Activated CD8-positive, alpha-beta T cell treated with anti-CD3 and anti-CD28 coated beads for 36 hours (primary cell): ENCODE measurements at regions of chr17 and their contacts with region 1.

Region 1: DNA sequence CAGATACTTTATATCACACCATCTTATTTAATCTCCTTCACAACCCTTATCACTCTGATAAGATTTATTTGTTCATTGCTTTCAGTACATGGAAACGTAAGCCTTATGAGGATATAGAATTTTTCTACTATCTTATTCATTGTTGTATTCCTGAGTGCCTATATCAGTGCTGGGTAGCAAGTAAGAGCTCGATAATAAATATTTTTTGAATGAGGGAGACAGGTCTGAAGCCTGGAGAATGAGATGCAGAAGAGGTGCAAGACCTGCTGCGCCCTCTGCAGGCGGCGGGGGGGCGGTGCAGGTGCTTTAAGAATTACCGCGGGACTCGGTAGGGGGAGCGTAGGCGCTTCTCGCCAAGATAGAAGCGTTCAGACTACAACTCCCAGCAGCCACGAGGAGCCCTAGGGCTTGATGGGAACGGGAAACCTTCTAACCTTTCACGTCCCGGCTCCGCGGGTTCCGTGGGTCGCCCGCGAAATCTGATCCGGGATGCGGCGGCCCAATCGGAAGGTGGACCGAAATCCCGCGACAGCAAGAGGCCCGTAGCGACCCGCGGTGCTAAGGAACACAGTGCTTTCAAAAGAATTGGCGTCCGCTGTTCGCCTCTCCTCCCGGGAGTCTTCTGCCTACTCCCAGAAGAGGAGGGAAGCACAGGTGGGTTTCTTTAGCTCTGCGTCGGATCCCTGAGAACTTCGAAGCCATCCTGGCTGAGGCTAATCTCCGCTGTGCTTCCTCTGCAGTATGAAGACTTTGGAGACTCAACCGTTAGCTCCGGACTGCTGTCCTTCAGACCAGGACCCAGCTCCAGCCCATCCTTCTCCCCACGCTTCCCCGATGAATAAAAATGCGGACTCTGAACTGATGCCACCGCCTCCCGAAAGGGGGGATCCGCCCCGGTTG is at the start of gene WRAP53:
- DNase-seq: peak; percentile 98
- ATAC-seq: peak; percentile 81
- H3K4me3 Mint-ChIP-seq: peak within 1 kb of the TSS; percentile 92
- H3K27ac Mint-ChIP-seq: peak within 1 kb of the TSS; percentile 99
- H3K4me1 Mint-ChIP-seq: peaks cover 29% of the 10 kb centered on the region
- H3K27me3 Mint-ChIP-seq: no peaks in the 10 kb centered on the region
- CTCF ChIP-seq: peak; percentile 100
- total RNA-seq, gene WRAP53: 27.5 to 28.6 TPM

Region 2: GRCh38 chr17:7435221-7435675 is 252.9 kb before region 1 on chr17 and contains the start of gene TMEM102:
- CTCF ChIA-PET with region 1: interaction called, 11 read pairs
- POLR2A ChIA-PET with region 1: interaction called, 28 read pairs
- intact Hi-C with region 1: no loop called
- DNase-seq: peak; percentile 99
- ATAC-seq: peak; percentile 82
- H3K4me3 Mint-ChIP-seq: peak within 1 kb of the TSS; percentile 94
- H3K27ac Mint-ChIP-seq: peak within 1 kb of the TSS; percentile 97
- H3K4me1 Mint-ChIP-seq: peaks cover 23% of the 10 kb centered on the region
- H3K27me3 Mint-ChIP-seq: peaks cover 12% of the 10 kb centered on the region
- CTCF ChIP-seq: no peak
- total RNA-seq, gene TMEM102: 12.5 to 14.2 TPM

Region 3: GRCh38 chr17:7572588-7573323 is 115.4 kb before region 1 on chr17:
- CTCF ChIA-PET with region 1: interaction called, 6 read pairs
- POLR2A ChIA-PET with region 1: interaction called, 71 read pairs
- intact Hi-C with region 1: no loop called
- DNase-seq: peak; percentile 99
- ATAC-seq: peak; percentile 92
- H3K4me3 Mint-ChIP-seq: peak overlapping the region; percentile 98
- H3K27ac Mint-ChIP-seq: peak overlapping the region; percentile 100
- H3K4me1 Mint-ChIP-seq: peaks cover 45% of the 10 kb centered on the region
- H3K27me3 Mint-ChIP-seq: peaks cover 1% of the 10 kb centered on the region
- CTCF ChIP-seq: no peak

Region 4: DNA sequence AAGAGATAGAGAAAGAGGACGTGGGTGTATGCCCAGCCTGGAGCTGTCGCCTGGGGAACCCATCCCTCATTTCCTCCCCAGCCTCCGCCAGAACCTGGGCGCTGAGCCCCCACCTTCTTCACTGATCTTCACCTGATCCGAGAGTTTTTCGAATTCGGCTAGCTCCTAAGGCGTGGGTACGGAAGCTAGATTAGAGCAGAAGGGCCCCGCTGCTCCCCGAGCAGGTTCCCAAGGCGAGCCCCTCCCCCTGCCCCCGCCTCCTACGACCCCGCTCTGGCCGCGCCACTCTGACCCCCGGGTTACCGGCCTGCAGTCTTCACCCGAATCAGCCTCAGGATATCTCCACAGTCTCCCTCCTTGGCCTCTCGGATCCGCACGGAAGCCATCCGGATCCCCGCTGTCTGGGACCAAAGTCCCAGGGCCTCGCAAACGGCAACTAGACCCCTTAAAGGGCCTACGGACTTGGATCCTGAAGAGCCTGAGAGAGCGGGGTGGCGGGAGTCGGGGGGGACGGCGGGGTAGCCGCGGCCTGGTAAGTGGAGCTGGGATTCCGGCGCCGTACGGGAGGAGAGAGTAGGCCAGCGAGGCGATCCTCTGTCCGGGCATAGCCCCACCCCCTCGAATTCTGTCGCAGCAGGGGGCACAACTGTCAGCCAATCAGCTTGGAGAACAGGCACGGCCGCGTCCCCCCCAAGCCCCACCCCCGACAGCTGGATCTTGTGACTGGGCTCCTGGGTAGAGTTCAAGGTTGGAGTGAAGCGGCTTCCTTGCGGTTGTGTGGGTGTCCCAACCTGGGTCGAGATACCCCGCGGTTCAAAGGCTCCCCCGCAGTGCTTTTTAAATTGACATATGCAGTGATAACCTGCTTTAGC is 60.7 kb before region 1 on chr17 and contains the start of gene SAT2:
- CTCF ChIA-PET with region 1: interaction called, 63 read pairs
- POLR2A ChIA-PET with region 1: interaction called, 41 read pairs
- intact Hi-C with region 1: loop called (anchors 5 kb)
- DNase-seq: peak; percentile 93
- ATAC-seq: peak; percentile 96
- H3K4me3 Mint-ChIP-seq: peak within 1 kb of the TSS; percentile 87
- H3K27ac Mint-ChIP-seq: peak within 1 kb of the TSS; percentile 76
- H3K4me1 Mint-ChIP-seq: peaks cover 10% of the 10 kb centered on the region
- H3K27me3 Mint-ChIP-seq: no peaks in the 10 kb centered on the region
- CTCF ChIP-seq: no peak
- total RNA-seq, gene SAT2: 15.6 to 22.2 TPM

Region 5: GRCh38 chr17:7656958-7657609 is 31.1 kb before region 1 on chr17:
- CTCF ChIA-PET with region 1: interaction called, 17 read pairs
- POLR2A ChIA-PET with region 1: interaction called, 29 read pairs
- intact Hi-C with region 1: no loop called
- DNase-seq: no peak
- ATAC-seq: no peak
- H3K4me3 Mint-ChIP-seq: no peak overlapping the region
- H3K27ac Mint-ChIP-seq: no peak overlapping the region
- H3K4me1 Mint-ChIP-seq: no peaks in the 10 kb centered on the region
- H3K27me3 Mint-ChIP-seq: peaks cover 13% of the 10 kb centered on the region
- CTCF ChIP-seq: no peak

Region 6: DNA sequence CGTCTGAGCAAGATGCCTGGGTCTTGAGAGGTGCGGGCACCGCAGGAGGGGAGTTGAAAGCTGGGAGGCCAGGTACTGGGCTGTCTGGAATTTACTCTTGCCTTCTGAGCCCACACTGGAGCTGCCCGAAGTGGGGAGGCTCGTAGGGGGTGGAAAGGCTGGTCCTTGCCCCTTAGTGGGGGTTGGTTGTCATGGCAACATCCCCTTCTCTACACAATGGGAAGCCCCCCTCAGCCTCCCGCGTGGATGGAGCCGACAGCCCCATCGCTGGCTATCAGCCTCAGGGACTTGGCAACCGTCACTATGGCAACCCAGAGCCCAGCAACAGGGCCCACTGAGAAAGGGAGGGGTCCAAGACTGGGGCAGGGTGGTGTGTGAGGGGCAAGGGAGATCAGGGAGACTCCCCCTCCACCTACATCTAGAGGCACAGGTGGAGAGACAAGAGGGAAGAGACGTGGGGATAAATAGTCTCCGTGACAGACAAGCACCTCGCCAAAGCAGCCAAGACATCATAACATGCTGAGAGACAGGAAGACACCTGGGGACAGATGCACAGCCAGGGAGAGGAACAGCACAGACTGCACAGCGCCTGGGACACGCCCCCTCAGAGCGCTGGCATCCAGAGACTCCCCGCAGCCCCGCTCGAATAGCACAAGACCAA is 24.1 kb after region 1 on chr17:
- CTCF ChIA-PET with region 1: interaction called, 6 read pairs
- POLR2A ChIA-PET with region 1: interaction called, 54 read pairs
- intact Hi-C with region 1: no loop called
- DNase-seq: no peak
- ATAC-seq: peak; percentile 46
- H3K4me3 Mint-ChIP-seq: no peak overlapping the region
- H3K27ac Mint-ChIP-seq: no peak overlapping the region
- H3K4me1 Mint-ChIP-seq: peaks cover 9% of the 10 kb centered on the region
- H3K27me3 Mint-ChIP-seq: peaks cover 54% of the 10 kb centered on the region
- CTCF ChIP-seq: no peak